ENCODE measurements at regions of chr16 and their contacts with region 1.

Region 1: DNA sequence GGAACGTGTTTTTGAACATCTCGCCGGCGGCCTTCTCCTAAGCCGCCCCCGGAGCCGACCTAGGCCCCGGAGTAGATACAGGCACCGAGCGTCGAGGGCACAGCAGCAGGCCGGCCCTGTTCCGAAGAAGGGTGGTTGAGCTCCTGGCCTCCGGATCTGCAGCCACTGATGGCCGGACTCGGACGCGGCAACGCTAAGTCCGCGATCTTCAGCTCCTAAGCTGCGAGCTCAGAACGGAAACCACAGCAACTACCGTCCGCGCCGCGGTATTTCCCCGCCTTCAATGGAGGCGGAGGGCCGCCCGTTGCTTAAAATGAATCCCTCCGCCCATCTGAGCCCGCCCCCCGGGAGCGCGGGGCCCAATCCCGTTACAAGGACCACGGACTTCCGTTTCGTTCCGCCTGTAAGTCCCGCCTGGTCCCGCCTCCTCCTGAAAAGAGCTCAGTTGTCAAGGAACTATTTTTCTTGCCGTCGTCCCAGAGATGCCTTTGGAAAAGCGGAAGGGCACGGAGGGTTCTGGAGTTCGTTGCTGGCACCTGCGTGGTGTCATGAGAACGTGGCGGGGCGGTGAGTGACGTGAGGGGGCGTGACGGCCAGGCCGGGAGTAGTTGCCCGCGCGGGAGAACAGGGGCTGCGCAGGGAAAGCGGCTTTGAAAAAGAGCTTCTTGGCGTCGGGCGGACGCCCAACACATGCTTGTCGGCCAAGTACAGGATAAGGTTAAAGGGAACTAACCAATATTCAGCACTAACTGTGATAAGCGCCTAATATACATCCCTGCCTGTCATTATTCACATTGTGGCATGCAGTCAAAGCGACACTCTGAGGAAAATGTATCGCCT is at the start of gene CFAP20:
- DNase-seq: peak; percentile 92 to 98 (median 96)
- ATAC-seq: peak; percentile 84
- H3K4me3 ChIP-seq: peak within 1 kb of the TSS; percentile 99
- H3K4me3 Mint-ChIP-seq: peak within 1 kb of the TSS; percentile 91
- H3K27ac ChIP-seq: peak within 1 kb of the TSS; percentile 84 to 88
- H3K27ac Mint-ChIP-seq: peak within 1 kb of the TSS; percentile 88
- H3K4me1 ChIP-seq: peaks cover 40% of the 10 kb centered on the region
- H3K4me1 Mint-ChIP-seq: peaks cover 47% of the 10 kb centered on the region
- H3K27me3 ChIP-seq: no peaks in the 10 kb centered on the region
- H3K27me3 Mint-ChIP-seq: no peaks in the 10 kb centered on the region
- CTCF ChIP-seq: no peak
- total RNA-seq, gene CFAP20: 250 to 261 TPM

Region 2: GRCh38 chr16:57475711-57476339 is 653.5 kb before region 1 on chr16:
- CTCF ChIA-PET with region 1: no interaction called
- POLR2A ChIA-PET with region 1: no interaction called
- intact Hi-C with region 1: loop called in 1 of 2 experiments (anchors 5 kb)
- DNase-seq: peak; percentile 31 to 88 (median 68)
- ATAC-seq: peak; percentile 97
- H3K4me3 ChIP-seq: no peak overlapping the region
- H3K4me3 Mint-ChIP-seq: peak overlapping the region; percentile 7
- H3K27ac ChIP-seq: no peak overlapping the region
- H3K27ac Mint-ChIP-seq: peak overlapping the region; percentile 51
- H3K4me1 ChIP-seq: peaks cover 21% of the 10 kb centered on the region
- H3K4me1 Mint-ChIP-seq: peaks cover 11% of the 10 kb centered on the region
- H3K27me3 ChIP-seq: no peaks in the 10 kb centered on the region
- H3K27me3 Mint-ChIP-seq: no peaks in the 10 kb centered on the region
- CTCF ChIP-seq: peak; percentile 76

Region 3: DNA sequence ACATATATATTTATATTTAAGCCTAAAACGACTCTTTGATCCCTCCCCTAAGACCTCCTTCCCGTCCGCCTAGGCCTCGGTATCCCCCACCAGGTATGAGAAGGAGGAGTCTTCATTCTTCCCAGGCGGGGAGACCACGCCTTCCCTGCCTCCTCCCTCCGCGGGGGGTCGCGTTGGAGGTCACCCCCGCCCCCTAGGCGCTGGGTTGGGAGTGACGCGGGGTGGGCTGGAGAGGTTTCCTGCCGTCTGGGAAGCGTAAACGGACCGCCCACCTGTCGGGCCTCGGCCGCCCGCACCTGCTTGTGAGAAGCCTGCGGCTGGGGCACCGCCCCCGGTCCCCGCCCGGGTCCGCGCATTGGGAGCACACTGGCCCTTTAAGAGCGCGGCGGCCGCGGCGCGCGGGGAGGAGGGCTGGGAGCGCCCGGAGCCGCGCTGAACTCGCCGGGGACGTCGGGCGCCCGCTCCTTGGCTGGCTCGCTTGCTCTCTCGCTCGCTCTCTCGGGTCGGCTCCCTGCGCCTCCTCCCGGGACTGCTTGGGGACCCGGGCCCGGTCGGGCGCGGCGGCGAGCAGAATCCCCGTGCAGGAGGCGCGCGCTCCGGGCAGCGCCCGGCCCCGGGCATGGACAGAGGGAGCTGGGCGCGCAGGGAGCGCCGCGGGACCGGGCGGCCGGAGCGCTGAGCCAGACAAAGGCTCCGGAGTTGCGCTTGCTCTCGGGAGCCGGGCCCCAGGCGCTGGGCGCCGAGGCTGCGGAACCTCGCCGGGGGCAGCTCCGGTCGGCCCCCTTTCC is 103.8 kb before region 1 on chr16 and contains the start of gene MMP15:
- CTCF ChIA-PET with region 1: no interaction called
- POLR2A ChIA-PET with region 1: interaction called, 28 read pairs
- intact Hi-C with region 1: loop called (anchors 2 to 5 kb)
- DNase-seq: peak; percentile 22 to 80 (median 56)
- ATAC-seq: peak; percentile 61
- H3K4me3 ChIP-seq: peak within 1 kb of the TSS; percentile 61
- H3K4me3 Mint-ChIP-seq: peak within 1 kb of the TSS; percentile 96
- H3K27ac ChIP-seq: no peak within 1 kb of the TSS
- H3K27ac Mint-ChIP-seq: peak within 1 kb of the TSS; percentile 81
- H3K4me1 ChIP-seq: peaks cover 34% of the 10 kb centered on the region
- H3K4me1 Mint-ChIP-seq: peaks cover 18% of the 10 kb centered on the region
- H3K27me3 ChIP-seq: peaks cover 7 to 13% of the 10 kb centered on the region in 2 experiments
- H3K27me3 Mint-ChIP-seq: peaks cover 9% of the 10 kb centered on the region
- CTCF ChIP-seq: no peak
- total RNA-seq, gene MMP15: 0.25 to 0.31 TPM

Region 4: GRCh38 chr16:58176608-58177352 is 47.5 kb after region 1 on chr16:
- CTCF ChIA-PET with region 1: interaction called, 3 read pairs
- POLR2A ChIA-PET with region 1: interaction called, 11 read pairs
- intact Hi-C with region 1: no loop called
- DNase-seq: peak in 3 of 14 experiments; percentile 16 to 42 (median 24)
- ATAC-seq: peak; percentile 96
- H3K4me3 ChIP-seq: no peak overlapping the region
- H3K4me3 Mint-ChIP-seq: peak overlapping the region; percentile 17
- H3K27ac ChIP-seq: peak overlapping the region in 1 of 2 donors; percentile 59
- H3K27ac Mint-ChIP-seq: peak overlapping the region; percentile 86
- H3K4me1 ChIP-seq: peaks cover 22% of the 10 kb centered on the region
- H3K4me1 Mint-ChIP-seq: peaks cover 59% of the 10 kb centered on the region
- H3K27me3 ChIP-seq: no peaks in the 10 kb centered on the region
- H3K27me3 Mint-ChIP-seq: no peaks in the 10 kb centered on the region
- CTCF ChIP-seq: no peak

Region 5: GRCh38 chr16:58392215-58393137 is 263.2 kb after region 1 on chr16 and contains the start of gene GINS3:
- CTCF ChIA-PET with region 1: no interaction called
- POLR2A ChIA-PET with region 1: interaction called, 7 read pairs
- intact Hi-C with region 1: loop called in 1 of 2 experiments (anchors 5 kb)
- DNase-seq: peak; percentile 66 to 91 (median 78)
- ATAC-seq: peak; percentile 97
- H3K4me3 ChIP-seq: peak within 1 kb of the TSS; percentile 100
- H3K4me3 Mint-ChIP-seq: peak within 1 kb of the TSS; percentile 100
- H3K27ac ChIP-seq: peak within 1 kb of the TSS; percentile 62 to 89
- H3K27ac Mint-ChIP-seq: peak within 1 kb of the TSS; percentile 92
- H3K4me1 ChIP-seq: peaks cover 12% of the 10 kb centered on the region
- H3K4me1 Mint-ChIP-seq: peaks cover 17% of the 10 kb centered on the region
- H3K27me3 ChIP-seq: no peaks in the 10 kb centered on the region
- H3K27me3 Mint-ChIP-seq: no peaks in the 10 kb centered on the region
- CTCF ChIP-seq: no peak
- total RNA-seq, gene GINS3: 0.27 to 0.36 TPM

Region 6: DNA sequence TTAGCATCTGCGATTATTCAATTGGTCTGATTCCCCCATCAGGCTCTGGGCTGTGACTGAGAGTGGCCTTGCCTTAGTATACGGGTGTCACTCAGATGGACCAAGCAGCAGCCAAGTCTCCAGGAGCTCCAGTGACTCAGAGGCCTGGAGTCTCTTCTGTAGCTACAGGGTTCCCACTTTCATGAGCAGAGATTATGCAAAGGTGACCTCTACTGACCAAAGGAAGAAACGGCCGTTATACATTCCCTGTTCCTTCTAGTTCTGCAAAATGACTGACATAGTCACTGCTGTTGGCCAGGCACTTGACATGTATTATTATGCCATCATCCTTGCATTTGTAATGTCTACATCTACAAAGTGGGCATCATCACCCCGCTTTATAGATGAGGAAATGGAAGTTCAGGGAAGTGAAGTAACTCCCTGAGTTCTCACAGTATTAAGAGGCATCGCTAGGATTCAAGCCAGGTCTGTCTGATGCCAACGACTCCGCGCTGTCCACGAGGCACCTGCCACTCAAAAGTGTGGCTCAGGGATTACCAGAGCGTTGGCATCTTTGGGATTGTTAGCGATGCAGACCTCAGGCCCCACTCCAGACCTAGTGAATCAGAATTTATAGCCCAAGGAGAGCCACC is 532.0 kb after region 1 on chr16:
- CTCF ChIA-PET with region 1: no interaction called
- POLR2A ChIA-PET with region 1: no interaction called
- intact Hi-C with region 1: no loop called
- DNase-seq: peak in 3 of 14 experiments; percentile 25 to 64 (median 52)
- ATAC-seq: no peak
- H3K4me3 ChIP-seq: no peak overlapping the region
- H3K4me3 Mint-ChIP-seq: no peak overlapping the region
- H3K27ac ChIP-seq: no peak overlapping the region
- H3K27ac Mint-ChIP-seq: no peak overlapping the region
- H3K4me1 ChIP-seq: no peaks in the 10 kb centered on the region
- H3K4me1 Mint-ChIP-seq: no peaks in the 10 kb centered on the region
- H3K27me3 ChIP-seq: no peaks in the 10 kb centered on the region
- H3K27me3 Mint-ChIP-seq: peaks cover 4% of the 10 kb centered on the region
- CTCF ChIP-seq: peak; percentile 15

Measured in CD4-positive, alpha-beta T cell (primary cell).